Naive thymus-derived CD4-positive, alpha-beta T cell (primary cell): ENCODE measurements at regions of chr10 and their contacts with region 1.

Region 1: DNA sequence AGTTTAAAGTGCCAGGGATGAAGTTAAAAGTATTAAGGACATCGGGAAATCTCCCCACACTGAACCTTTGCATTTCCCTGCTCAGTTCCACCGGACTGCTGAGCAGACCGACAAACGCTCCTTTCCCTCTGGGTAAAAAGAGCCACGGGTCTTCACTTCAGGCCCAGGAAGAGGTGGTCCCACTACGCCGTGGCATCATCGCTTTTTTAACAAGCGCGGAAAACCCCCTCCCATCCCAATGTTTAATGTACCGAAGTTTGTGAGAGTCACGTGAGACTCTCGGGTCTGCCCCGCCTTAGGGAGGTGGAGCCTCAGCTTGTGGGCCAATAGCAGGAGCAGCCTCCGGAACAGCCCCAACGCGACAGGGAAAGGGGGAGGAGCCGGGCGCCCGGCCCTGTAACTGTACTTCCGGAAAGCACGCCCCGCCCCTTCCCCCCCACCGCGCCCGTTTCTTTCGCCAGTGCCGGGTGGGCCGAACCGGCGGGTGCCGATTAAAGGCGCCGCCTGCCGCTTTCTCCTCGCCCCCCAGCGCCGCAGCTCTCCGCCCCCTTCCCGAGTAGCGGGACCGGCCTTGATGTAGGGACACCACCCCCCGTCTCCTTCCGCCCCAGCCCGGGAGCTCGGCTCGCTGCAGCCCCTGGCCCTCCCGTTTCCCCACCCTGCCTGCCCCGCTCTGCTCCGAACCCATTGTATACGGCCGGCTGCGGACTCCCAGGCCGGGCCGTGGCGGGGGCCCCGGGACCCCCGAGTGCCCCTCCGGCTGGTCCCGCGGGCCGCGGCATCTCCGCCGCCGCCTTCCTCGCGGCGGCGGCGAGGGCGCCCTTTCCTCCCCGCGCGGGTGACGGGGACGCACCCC is 2.2 kb upstream of the TRIM8 start:
- DNase-seq: peak; percentile 85 to 99 (median 93)
- ATAC-seq: peak; percentile 84
- H3K4me3 ChIP-seq: peak overlapping the region; percentile 85
- H3K4me3 Mint-ChIP-seq: peak overlapping the region; percentile 90 to 97 (median 93)
- H3K27ac ChIP-seq: peak overlapping the region; percentile 98
- H3K27ac Mint-ChIP-seq: peak overlapping the region; percentile 84 to 98 (median 95)
- H3K4me1 ChIP-seq: peaks cover 8 to 13% of the 10 kb centered on the region in 2 donors
- H3K4me1 Mint-ChIP-seq: peaks cover 13 to 29% (median 19%) of the 10 kb centered on the region in 7 donors
- H3K27me3 ChIP-seq: no peaks in the 10 kb centered on the region
- H3K27me3 Mint-ChIP-seq: peaks cover 0 to 6% (median 0%) of the 10 kb centered on the region in 5 donors

Region 2: DNA sequence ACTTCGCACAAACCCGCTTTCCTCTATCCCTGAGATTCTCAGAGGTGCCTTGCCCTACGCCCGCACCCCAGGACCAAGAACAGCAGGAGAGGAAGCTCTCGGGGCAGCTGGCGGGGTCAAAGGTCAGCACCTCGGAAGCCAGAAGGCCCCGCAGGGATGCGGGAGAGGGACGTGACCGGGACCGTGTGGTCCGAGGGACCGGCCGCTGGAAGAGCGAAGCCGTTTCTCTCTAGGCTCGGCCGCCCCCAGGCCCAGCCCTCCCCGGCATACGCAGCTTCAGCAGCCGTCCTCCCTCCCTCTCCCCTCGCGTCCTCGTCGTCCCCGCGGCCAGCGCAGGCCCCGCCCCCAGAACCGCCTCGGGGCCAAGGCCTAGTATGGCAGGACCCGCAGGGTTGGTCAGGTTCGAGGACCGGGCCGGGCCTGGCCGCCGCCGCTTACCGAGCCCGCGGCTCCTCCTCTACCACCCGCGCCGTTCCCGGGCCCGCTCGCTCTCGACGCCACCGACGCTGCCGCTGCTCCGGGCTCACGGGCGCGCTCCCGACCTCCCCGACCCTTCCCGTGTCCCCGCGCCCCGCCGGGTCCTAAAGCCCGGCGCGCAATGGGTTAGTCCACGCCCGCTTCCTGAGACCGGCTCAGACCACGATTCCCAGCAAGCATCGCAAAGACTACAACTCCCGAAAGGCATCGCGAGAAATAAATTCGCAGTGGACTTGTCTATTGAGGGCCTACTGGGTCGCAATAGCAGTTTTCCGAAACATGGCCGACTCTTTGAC is 586.3 kb before region 1 on chr10 and contains the start of gene ARMH3:
- CTCF ChIA-PET with region 1: no interaction called
- POLR2A ChIA-PET with region 1: interaction called, 3 read pairs
- intact Hi-C with region 1: loop called in 1 of 2 experiments (anchors 5 kb)
- DNase-seq: peak; percentile 72 to 90 (median 87)
- ATAC-seq: peak; percentile 98
- H3K4me3 ChIP-seq: peak within 1 kb of the TSS; percentile 92
- H3K4me3 Mint-ChIP-seq: peak within 1 kb of the TSS; percentile 89 to 98 (median 94)
- H3K27ac ChIP-seq: peak within 1 kb of the TSS; percentile 87
- H3K27ac Mint-ChIP-seq: peak within 1 kb of the TSS; percentile 76 to 97 (median 92)
- H3K4me1 ChIP-seq: peaks cover 18 to 20% of the 10 kb centered on the region in 2 donors
- H3K4me1 Mint-ChIP-seq: peaks cover 25 to 50% (median 42%) of the 10 kb centered on the region in 7 donors
- H3K27me3 ChIP-seq: no peaks in the 10 kb centered on the region
- H3K27me3 Mint-ChIP-seq: no peaks in the 10 kb centered on the region
- total RNA-seq, gene ARMH3: 26.7 to 34.0 (median 28.8) TPM

Region 3: GRCh38 chr10:102151774-102152544 is 490.1 kb before region 1 on chr10 and contains the start of gene NOLC1:
- CTCF ChIA-PET with region 1: no interaction called
- POLR2A ChIA-PET with region 1: interaction called, 4 read pairs
- intact Hi-C with region 1: loop called (anchors 1 kb)
- DNase-seq: peak; percentile 95 to 100 (median 100)
- ATAC-seq: peak; percentile 97
- H3K4me3 ChIP-seq: peak within 1 kb of the TSS; percentile 87
- H3K4me3 Mint-ChIP-seq: peak within 1 kb of the TSS; percentile 91 to 98 (median 96)
- H3K27ac ChIP-seq: peak within 1 kb of the TSS; percentile 94
- H3K27ac Mint-ChIP-seq: peak within 1 kb of the TSS; percentile 91 to 98 (median 96)
- H3K4me1 ChIP-seq: peaks cover 11 to 16% of the 10 kb centered on the region in 2 donors
- H3K4me1 Mint-ChIP-seq: peaks cover 28 to 58% (median 43%) of the 10 kb centered on the region in 7 donors
- H3K27me3 ChIP-seq: no peaks in the 10 kb centered on the region
- H3K27me3 Mint-ChIP-seq: peaks cover 0 to 4% (median 0%) of the 10 kb centered on the region in 5 donors
- total RNA-seq, gene NOLC1: 45.1 to 98.5 (median 58.8) TPM

Region 4: DNA sequence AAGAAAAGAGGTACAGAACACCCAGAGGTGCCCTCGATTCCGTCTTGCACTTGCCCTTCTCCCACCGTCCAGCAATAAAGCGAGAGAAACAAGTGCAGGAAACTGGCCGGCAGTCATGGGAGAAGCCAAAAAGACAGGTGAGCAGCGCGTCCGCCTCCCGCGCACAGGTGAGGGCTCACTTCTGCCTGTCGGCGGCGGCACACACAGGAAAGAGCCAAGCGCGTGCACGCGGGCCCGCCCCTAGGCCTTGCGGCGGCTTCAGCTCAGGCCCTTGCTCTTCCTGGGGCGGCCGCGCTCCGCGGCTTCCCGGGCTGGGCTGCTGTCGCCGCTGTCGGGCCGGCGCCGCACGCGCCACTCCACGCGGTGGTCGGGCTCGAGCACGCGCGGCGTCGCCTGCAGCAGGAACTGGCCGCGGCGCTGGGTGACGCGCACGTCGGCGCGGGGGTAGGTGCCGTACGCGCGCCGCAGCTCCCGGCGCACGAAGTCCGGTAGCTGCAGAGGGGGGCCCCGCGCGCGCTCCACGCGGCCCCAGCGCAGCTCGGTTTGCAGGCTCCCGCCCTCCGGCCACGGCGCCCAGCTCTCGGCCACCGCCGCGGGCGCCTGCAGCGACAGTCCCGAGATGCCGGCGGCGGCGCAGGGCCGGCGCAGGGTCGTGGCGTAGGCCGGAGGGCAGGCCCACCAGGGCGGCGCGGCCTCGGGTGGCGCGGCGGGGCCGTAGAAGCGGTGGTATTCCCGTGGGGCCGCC is 191.7 kb before region 1 on chr10:
- CTCF ChIA-PET with region 1: no interaction called
- POLR2A ChIA-PET with region 1: interaction called, 9 read pairs
- intact Hi-C with region 1: loop called (anchors 2 to 5 kb)
- DNase-seq: peak; percentile 85 to 95 (median 92)
- ATAC-seq: peak; percentile 90
- H3K4me3 ChIP-seq: peak overlapping the region; percentile 88
- H3K4me3 Mint-ChIP-seq: peak overlapping the region; percentile 89 to 97 (median 94)
- H3K27ac ChIP-seq: peak overlapping the region; percentile 90
- H3K27ac Mint-ChIP-seq: peak overlapping the region; percentile 81 to 97 (median 95)
- H3K4me1 ChIP-seq: peaks cover 12 to 14% of the 10 kb centered on the region in 2 donors
- H3K4me1 Mint-ChIP-seq: peaks cover 14 to 37% (median 27%) of the 10 kb centered on the region in 7 donors
- H3K27me3 ChIP-seq: no peaks in the 10 kb centered on the region
- H3K27me3 Mint-ChIP-seq: no peaks in the 10 kb centered on the region

Region 5: DNA sequence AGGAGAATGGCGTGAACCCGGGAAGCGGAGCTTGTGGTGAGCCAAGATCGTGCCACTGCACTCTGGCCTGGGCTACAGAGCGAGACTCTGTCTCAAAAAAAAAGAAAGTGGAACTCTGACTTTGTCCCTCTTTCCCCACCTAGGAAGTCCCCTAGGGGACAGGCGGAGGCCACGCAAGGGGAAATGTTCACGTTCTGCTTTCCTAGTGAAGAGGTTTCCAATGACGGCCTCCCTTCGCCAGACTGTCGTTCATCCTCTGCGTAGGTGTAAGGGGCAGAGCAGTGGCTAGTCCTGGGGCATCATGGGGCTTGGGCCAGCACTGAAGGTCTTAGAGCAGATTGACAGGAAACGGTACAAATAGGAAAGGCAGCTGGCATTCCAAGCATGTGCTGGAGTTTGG is 107.8 kb before region 1 on chr10:
- CTCF ChIA-PET with region 1: no interaction called
- POLR2A ChIA-PET with region 1: no interaction called
- intact Hi-C with region 1: no loop called
- DNase-seq: no peak
- ATAC-seq: peak; percentile 65
- H3K4me3 ChIP-seq: no peak overlapping the region
- H3K4me3 Mint-ChIP-seq: no peak overlapping the region
- H3K27ac ChIP-seq: no peak overlapping the region
- H3K27ac Mint-ChIP-seq: no peak overlapping the region
- H3K4me1 ChIP-seq: no peaks in the 10 kb centered on the region
- H3K4me1 Mint-ChIP-seq: peaks cover 5 to 22% (median 14%) of the 10 kb centered on the region in 7 donors
- H3K27me3 ChIP-seq: no peaks in the 10 kb centered on the region
- H3K27me3 Mint-ChIP-seq: no peaks in the 10 kb centered on the region

Region 6: DNA sequence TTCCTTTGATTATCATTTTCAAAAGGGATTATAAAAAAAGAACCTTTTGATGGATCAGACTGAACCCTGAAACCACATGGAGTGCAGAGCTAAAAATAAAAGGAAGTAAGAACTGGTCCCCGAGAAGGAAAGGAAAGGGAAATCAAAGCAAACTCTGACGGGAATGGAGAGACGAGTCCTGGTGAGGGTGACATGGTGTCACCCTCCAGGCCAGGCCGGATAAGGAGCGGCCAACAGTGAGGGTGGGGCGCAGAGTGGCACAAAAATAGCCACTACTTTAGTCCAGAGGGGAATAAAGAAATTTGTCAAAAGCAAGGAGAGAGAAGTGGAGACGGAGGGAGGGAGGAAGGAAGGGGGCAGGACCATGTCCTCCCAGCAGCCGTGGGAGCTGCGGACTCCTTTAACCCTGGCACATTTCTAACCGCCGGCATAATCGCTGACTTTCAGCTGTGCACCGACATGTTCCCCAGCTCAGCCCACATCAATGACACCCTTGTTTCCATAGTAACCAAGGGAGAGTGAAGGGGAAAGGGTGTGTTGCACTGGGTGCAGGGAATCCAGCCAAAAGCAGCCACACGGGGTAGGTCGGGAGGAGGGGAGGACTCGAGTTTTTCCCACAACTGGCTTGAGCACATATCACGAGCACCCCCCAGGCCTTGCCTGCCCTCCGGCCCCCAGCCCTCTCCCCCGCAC is 31.9 kb after region 1 on chr10:
- CTCF ChIA-PET with region 1: interaction called, 22 read pairs
- POLR2A ChIA-PET with region 1: interaction called, 169 read pairs
- intact Hi-C with region 1: loop called (anchors 1 kb)
- DNase-seq: peak; percentile 34 to 91 (median 89)
- ATAC-seq: peak; percentile 91
- H3K4me3 ChIP-seq: peak overlapping the region; percentile 52
- H3K4me3 Mint-ChIP-seq: peak overlapping the region; percentile 78 to 93 (median 85)
- H3K27ac ChIP-seq: peak overlapping the region; percentile 85
- H3K27ac Mint-ChIP-seq: peak overlapping the region; percentile 75 to 97 (median 91)
- H3K4me1 ChIP-seq: peaks cover 18 to 41% of the 10 kb centered on the region in 2 donors
- H3K4me1 Mint-ChIP-seq: peaks cover 36 to 82% (median 58%) of the 10 kb centered on the region in 7 donors
- H3K27me3 ChIP-seq: no peaks in the 10 kb centered on the region
- H3K27me3 Mint-ChIP-seq: no peaks in the 10 kb centered on the region

Region 7: GRCh38 chr10:102853944-102854694 is 212.0 kb after region 1 on chr10 and contains the start of gene BORCS7:
- CTCF ChIA-PET with region 1: no interaction called
- POLR2A ChIA-PET with region 1: no interaction called
- intact Hi-C with region 1: loop called in 1 of 2 experiments (anchors 2 kb)
- DNase-seq: peak; percentile 69 to 91 (median 88)
- ATAC-seq: peak; percentile 100
- H3K4me3 ChIP-seq: peak within 1 kb of the TSS; percentile 100
- H3K4me3 Mint-ChIP-seq: peak within 1 kb of the TSS; percentile 84 to 99 (median 91)
- H3K27ac ChIP-seq: peak within 1 kb of the TSS; percentile 95
- H3K27ac Mint-ChIP-seq: peak within 1 kb of the TSS; percentile 96 to 99 (median 99)
- H3K4me1 ChIP-seq: no peaks in the 10 kb centered on the region
- H3K4me1 Mint-ChIP-seq: peaks cover 7 to 25% (median 15%) of the 10 kb centered on the region in 7 donors
- H3K27me3 ChIP-seq: no peaks in the 10 kb centered on the region
- H3K27me3 Mint-ChIP-seq: no peaks in the 10 kb centered on the region
- total RNA-seq, gene BORCS7: 11.6 to 20.2 (median 13.3) TPM

Region 8: GRCh38 chr10:103911021-103911459 is 1268.9 kb after region 1 on chr10:
- CTCF ChIA-PET with region 1: no interaction called
- POLR2A ChIA-PET with region 1: no interaction called
- intact Hi-C with region 1: loop called (anchors 5 to 10 kb)
- DNase-seq: peak in 8 of 9 donors; percentile 44 to 89 (median 83)
- ATAC-seq: peak; percentile 84
- H3K4me3 ChIP-seq: peak overlapping the region; percentile 55
- H3K4me3 Mint-ChIP-seq: peak overlapping the region; percentile 74 to 87 (median 84)
- H3K27ac ChIP-seq: peak overlapping the region; percentile 78
- H3K27ac Mint-ChIP-seq: peak overlapping the region; percentile 96 to 99 (median 97)
- H3K4me1 ChIP-seq: peaks cover 80 to 81% of the 10 kb centered on the region in 2 donors
- H3K4me1 Mint-ChIP-seq: peaks cover 47 to 88% (median 76%) of the 10 kb centered on the region in 7 donors
- H3K27me3 ChIP-seq: no peaks in the 10 kb centered on the region
- H3K27me3 Mint-ChIP-seq: no peaks in the 10 kb centered on the region